ENCODE measurements at regions of chr17 and their contacts with region 1.

Region 1: DNA sequence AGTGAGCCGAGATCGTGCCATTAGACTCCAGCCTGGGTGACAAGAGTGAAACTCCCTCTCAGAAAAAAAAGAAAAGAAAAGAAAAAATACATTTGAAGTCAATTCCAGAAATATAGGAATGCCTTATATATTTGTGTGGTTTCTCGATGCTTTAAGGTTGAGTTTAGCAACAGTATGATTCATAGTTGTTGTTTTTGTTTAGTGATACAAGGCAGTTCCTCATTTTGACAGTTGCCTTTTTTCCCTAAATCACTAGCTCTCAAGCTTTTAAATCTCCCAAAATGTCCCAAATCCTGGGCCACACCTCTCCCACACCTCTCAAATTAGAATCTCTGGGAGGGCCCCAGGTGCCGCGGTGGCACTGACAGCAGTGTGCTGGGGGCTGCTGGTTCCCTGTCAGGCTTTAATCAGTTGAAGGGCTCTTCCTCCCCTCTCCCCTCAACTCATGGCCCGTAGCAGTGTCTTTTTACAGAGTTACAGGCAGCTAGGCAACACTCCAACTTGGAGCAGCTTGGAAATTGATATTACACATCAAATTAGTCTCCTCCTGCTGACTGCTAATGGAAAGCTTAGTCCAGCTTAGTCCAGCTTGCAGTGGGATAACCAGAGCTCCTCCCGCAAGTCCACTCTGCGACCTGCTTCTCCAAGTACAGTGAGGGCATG is 58.4 kb downstream of the EPN2 start:
- DNase-seq: no peak
- H3K4me3 ChIP-seq: no peak overlapping the region
- H3K27ac ChIP-seq: no peak overlapping the region
- H3K4me1 ChIP-seq: peaks cover 0 to 10% of the 10 kb centered on the region in 2 experiments; a peak in 1 of 4 replicates
- H3K27me3 ChIP-seq: no peaks in the 10 kb centered on the region
- CTCF ChIP-seq: no peak
- EP300 ChIP-seq: no peak
- RAD21 ChIP-seq: no peak

Region 2: DNA sequence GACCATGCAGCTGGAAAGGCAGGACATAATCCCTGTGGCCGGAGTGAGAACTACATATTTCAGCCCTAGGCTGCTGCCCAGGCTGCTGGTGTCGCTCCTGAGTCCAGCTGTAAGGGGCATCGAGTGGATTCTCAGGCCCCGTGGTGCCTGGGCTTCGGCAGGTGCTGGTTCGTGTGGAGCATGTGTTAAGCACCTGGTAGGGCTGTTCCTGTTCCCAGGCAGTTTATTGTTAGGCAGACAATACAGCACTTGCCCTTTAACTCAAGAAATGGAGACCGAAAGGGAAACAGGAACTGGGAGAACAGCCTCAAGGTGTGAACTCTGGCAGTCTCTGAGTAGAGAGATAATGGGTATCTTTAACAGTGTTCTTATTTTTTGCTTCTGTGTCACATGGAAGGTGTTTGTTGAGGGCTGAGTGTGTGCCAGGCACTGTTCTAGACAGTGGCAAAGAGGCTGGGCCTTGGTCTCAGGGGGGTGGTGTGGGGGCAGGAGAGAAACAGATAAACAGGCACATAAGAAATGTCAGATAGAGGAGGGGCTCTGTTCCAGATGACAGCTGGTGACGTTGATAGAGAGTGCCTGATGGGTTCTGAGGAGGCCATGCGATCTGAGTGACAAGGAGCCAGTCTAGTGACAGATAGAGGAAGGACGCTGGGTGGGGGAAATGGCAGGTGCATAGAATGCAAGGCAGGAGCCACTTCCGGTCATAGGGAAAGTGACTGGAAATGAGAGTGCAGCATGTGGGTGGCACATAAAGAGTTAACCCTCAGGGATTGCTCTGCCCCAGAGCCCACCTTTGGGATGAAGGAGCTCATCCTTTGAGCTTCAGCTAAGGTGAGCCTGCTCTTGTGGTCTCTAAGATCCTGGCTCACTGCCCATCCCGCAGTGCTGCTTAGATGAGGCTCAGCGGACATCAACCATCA is 24.7 kb before region 1 on chr17:
- CTCF ChIA-PET with region 1: no interaction called
- POLR2A ChIA-PET with region 1: no interaction called
- DNase-seq: no peak
- H3K4me3 ChIP-seq: no peak overlapping the region
- H3K27ac ChIP-seq: no peak overlapping the region; a peak in 1 of 4 replicates
- H3K4me1 ChIP-seq: peaks cover 0 to 17% of the 10 kb centered on the region in 2 experiments; a peak in 1 of 4 replicates
- H3K27me3 ChIP-seq: no peaks in the 10 kb centered on the region
- CTCF ChIP-seq: no peak
- EP300 ChIP-seq: no peak
- RAD21 ChIP-seq: no peak

Region 3: GRCh38 chr17:19308358-19308757 is 12.8 kb after region 1 on chr17:
- CTCF ChIA-PET with region 1: interaction called, 4 read pairs
- POLR2A ChIA-PET with region 1: interaction called, 10 read pairs
- DNase-seq: no peak
- H3K4me3 ChIP-seq: no peak overlapping the region
- H3K27ac ChIP-seq: no peak overlapping the region
- H3K4me1 ChIP-seq: peaks cover 19 to 22% of the 10 kb centered on the region in 2 experiments; a peak in 3 of 4 replicates
- H3K27me3 ChIP-seq: no peaks in the 10 kb centered on the region
- CTCF ChIP-seq: no peak
- EP300 ChIP-seq: no peak
- RAD21 ChIP-seq: no peak

Measured in SK-N-SH (cell line).